Cardiac septum (tissue), 1 donor: ENCODE measurements at regions of chr17 and their contacts with region 1.

Region 1: GRCh38 chr17:51166197-51166986 is at the start of gene NME2:
- DNase-seq: peak; percentile 94
- total RNA-seq, gene NME2: 225 TPM

Region 2: DNA sequence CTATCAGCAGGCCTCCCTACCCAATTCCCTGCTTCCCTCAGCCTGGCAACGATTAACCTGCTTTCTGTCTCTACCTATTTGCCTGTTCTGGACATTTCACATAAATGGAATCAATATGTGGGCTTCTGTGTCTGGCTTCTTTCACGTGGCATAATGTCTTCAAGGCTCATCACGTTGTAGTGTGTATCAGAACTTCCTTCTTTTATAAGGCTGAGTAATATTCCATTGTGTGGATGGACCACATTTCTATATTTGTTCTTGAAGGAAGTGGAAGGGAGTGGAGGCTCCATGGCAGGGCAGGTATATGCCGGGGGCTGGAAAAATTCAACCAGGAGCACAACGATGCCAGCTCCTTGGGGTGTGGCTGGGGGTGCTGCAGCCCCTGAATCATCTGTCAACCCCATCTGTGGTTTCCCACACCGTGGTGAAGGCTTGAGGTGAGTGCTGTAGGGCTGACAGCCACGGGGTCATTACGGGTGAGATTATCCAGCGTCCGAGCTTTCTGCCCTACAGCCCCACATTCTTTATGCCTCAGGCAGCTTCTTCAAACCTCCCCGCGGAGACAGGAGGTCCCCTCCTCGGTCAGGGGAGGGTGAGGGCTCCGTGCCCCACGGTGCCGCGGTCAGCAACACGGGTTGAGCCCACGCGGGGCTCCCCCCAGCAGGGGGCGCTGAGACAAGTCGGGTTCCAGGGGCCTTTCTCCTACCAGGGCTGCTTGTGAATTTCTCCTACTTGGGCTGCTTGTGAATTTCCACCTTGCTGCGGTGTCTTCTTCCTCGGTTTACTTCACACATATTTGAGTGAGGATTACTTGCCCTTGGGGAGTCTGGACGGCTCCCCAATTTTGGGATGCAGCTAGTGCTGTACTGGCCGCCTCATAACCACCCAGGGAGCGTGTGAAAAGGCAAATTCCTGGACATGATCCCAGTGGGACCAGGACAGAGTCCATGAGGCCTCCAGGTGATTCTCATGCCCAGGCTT is 349.3 kb before region 1 on chr17:
- intact Hi-C with region 1: no loop called
- DNase-seq: no peak

Region 3: DNA sequence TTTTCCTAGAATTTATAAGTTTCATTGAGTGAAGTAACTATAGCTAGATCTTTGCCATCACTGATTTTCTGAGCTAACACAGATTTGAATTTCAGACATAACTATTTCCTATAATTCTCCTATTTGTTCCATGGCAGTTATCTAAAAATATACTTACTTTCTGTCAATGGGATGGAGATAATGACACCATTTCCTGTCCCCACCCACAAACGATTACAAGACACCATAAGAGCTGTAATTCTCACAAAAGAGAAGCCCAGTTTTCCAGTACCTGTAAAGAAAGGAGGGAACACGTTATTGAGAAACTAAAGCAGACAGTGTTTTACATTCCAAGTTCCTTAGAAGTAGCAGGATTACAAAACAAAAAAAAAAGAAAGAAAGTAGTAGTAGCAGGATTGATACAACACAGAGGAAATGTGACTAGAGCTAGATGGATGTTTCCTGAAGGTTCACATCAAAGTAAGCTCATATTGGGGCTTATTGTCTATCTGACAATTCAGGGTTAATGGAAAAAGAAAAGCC is 189.4 kb before region 1 on chr17:
- intact Hi-C with region 1: no loop called
- DNase-seq: no peak

Region 4: GRCh38 chr17:51200295-51200694 is 33.9 kb after region 1 on chr17:
- intact Hi-C with region 1: no loop called
- DNase-seq: no peak

Region 5: GRCh38 chr17:51259564-51260124 is 93.3 kb after region 1 on chr17 and contains the start of gene MBTD1:
- intact Hi-C with region 1: loop called (anchors 10 kb)
- DNase-seq: peak; percentile 97
- total RNA-seq, gene MBTD1: 6.6 TPM

Region 6: DNA sequence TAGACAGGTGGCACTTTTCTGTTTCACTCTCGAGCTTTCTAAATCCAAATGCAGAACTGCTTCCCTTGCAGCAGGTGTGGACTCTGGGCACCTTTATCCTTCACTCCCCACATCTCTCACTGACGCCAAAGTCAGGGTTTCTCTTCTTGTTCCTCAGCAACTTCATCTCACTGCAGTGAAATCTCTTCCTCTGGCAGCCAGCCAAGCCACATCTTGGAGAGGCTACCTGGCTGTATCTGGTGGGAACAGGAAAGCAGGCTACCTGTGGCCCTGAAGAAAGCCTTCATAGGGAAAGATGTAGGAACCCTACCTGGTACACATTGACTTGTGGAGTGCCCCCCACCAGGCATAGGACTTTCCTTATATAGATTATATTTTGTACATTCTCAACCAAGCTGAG is 253.1 kb after region 1 on chr17:
- intact Hi-C with region 1: no loop called
- DNase-seq: no peak